ENCODE measurements at regions of chr11 and their contacts with region 1.

Region 1: DNA sequence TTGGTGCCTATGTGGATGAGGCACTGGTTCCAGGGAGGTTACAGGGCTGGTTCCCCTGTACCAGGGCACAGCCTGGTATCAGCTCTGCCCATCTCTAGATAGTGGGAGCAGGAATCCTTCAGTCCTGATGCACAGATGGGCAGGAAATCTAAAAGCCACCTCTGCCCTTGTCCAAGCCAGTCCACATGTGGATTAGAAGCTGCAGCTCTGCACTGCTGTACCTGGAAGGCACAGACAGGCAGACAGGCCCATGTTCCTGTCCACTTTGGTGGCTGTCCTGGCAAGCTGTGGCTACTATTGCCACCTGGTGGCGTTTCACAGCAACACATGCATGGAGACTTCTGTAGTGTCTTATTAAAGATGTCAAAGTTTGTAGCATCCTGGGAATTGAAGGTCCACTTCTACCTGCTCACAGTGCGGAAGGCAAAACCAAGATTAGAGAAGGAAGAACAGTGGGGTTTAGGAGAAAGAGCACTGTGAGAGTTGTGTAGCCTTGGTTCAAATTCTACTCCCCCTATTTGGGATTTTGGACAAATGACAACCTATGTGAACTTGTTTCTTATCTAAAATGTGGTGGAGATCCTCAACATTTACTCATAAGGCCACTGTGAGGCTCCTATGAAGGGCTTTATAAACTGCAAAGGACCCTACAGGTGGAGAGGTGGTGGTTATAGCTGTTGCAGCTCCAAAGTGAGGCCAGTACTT is 30.1 kb downstream of the NAV2 start:
- DNase-seq: no peak
- ATAC-seq: peak; percentile 99
- H3K4me3 ChIP-seq: no peak overlapping the region
- H3K27ac ChIP-seq: no peak overlapping the region
- H3K4me1 ChIP-seq: no peaks in the 10 kb centered on the region
- H3K27me3 ChIP-seq: no peaks in the 10 kb centered on the region
- CTCF ChIP-seq: peak; percentile 74 to 80 (median 75)
- EP300 ChIP-seq: no peak
- POLR2A ChIP-seq: no peak
- RAD21 ChIP-seq: peak; percentile 85

Region 2: GRCh38 chr11:19259487-19260345 is 483.0 kb before region 1 on chr11:
- CTCF ChIA-PET with region 1: interaction called, 4 read pairs
- POLR2A ChIA-PET with region 1: no interaction called
- RAD21 ChIA-PET with region 1: no interaction called
- SMC1A ChIA-PET with region 1: no interaction called
- in situ Hi-C with region 1: no loop called
- intact Hi-C with region 1: loop called (anchors 5 kb)
- DNase-seq: no peak
- ATAC-seq: peak; percentile 91
- H3K4me3 ChIP-seq: no peak overlapping the region
- H3K27ac ChIP-seq: no peak overlapping the region
- H3K4me1 ChIP-seq: no peaks in the 10 kb centered on the region; the same call in 1 of the 2 replicates
- H3K27me3 ChIP-seq: no peaks in the 10 kb centered on the region; a peak in 1 of 4 replicates
- CTCF ChIP-seq: peak; percentile 90 to 96 (median 93)
- EP300 ChIP-seq: no peak
- POLR2A ChIP-seq: no peak
- RAD21 ChIP-seq: peak; percentile 78

Region 3: DNA sequence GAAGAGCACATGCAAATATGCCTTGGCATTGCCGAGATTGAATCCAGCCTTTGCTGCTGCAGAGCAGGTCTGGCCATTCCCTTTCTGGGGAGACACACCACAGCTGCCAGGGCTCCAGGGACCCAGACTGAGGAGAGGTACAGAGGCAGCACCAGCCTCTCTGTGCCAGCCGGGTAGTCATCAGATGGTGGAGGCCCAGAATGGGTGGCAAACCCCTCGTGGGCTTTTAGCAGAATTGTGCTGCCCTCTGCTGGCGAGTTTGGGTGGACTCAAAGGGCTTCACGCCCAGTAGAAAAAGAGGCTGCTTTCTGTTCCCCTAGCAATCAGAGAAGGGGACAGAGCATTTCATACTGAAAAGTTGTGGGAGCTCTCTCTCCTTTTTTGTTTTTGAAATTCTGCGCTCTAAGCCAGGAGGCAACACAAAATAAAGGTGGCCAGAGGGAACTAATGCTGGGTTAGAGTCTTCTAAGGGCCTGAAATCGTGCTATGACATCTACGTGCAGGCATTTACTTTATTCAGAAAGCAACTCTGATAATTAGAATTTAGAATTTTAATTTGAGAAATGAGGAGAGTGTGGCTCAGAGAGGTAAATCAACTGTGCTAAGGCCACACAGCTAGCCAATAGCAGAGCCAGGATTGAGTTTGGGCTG is 188.9 kb before region 1 on chr11:
- CTCF ChIA-PET with region 1: interaction called, 37 read pairs
- POLR2A ChIA-PET with region 1: no interaction called
- RAD21 ChIA-PET with region 1: interaction called, 3 read pairs
- SMC1A ChIA-PET with region 1: interaction called, 3 read pairs
- in situ Hi-C with region 1: no loop called
- intact Hi-C with region 1: loop called (anchors 2 kb)
- DNase-seq: no peak
- ATAC-seq: peak; percentile 94
- H3K4me3 ChIP-seq: no peak overlapping the region
- H3K27ac ChIP-seq: no peak overlapping the region
- H3K4me1 ChIP-seq: peaks cover 13% of the 10 kb centered on the region
- H3K27me3 ChIP-seq: no peaks in the 10 kb centered on the region; a peak in 1 of 4 replicates
- CTCF ChIP-seq: peak; percentile 77 to 94 (median 82)
- EP300 ChIP-seq: no peak
- POLR2A ChIP-seq: no peak
- RAD21 ChIP-seq: peak; percentile 97

Region 4: DNA sequence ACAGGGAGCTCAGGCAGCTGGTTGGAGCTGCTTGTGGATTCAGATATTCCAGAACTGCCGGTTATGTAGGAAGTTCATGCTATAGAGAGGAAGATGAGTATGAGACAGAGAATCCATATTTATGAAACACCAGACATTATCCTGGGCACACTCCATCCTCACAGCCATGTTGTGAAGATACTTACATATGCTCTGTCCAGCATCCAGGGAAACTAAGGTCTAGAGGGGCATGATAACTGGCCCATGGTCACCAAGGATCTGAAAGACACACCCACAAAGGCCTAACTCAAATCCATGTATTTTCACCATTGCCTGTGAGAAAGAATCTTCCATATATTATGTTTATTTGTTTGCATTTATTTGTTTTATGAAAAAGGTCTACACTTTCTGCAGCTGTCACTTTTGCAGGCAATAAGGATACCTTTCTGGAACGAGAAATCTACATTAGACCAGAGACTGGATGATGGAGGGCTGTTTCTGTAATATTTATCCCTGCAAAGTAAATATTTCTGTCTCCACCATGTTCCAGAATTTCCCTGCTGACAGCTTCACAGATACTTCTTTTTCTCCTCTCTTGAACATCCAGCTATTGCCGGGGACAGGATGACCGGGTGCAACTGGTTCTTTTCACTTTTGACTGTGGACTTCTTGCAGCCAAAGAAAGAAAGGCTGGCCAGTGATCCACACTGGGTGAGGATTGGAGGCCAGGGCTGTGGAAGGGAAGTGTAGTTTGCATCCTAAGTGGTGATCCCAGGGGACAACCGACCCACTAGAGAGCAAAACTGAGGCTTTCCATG is 176.0 kb before region 1 on chr11:
- CTCF ChIA-PET with region 1: interaction called, 61 read pairs
- POLR2A ChIA-PET with region 1: no interaction called
- RAD21 ChIA-PET with region 1: interaction called, 31 read pairs
- SMC1A ChIA-PET with region 1: interaction called, 41 read pairs
- in situ Hi-C with region 1: loop called (anchors 5 kb)
- intact Hi-C with region 1: loop called (anchors 1 kb)
- DNase-seq: no peak
- ATAC-seq: no peak
- H3K4me3 ChIP-seq: no peak overlapping the region
- H3K27ac ChIP-seq: no peak overlapping the region
- H3K4me1 ChIP-seq: no peaks in the 10 kb centered on the region
- H3K27me3 ChIP-seq: no peaks in the 10 kb centered on the region; a peak in 2 of 4 replicates
- CTCF ChIP-seq: no peak
- EP300 ChIP-seq: no peak
- POLR2A ChIP-seq: no peak
- RAD21 ChIP-seq: no peak

Region 5: DNA sequence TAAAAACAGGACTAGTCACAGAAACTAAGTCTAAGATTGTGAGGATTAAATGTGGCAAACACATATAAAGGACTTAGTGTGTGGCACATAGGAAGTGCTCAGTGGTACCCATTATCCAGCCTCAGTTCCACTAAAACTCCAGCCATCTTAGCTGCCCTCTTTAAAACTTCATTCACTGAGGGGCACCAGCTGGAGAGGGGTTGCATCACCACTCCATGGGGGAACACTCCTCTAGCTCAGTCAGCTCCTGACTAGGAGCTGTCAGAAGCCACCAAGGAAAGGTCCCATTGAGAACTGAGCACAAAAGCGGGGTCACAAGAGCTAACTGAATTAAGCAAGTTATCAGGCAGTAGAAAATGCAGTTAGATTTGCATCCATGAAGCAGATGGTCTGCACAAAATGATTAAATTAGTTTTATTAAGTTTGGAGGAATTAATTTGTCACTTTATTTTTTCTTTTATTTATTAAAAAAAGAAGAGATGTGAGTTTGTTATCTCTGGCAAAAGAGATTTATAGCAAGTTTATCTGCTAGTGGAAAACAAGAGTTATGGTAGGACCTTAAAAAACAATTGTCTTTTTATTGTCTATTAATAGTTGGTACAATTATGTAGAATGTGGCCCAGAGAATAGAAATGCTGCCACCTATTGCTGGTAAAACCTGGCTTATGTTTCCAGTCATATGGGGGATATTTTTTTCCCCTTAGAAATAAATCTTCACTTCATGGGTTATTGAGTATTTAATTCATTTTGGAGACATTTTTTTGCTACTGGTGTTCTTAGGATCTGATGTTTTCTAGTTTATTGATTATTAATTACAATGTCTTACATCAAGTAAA is 65.6 kb after region 1 on chr11:
- CTCF ChIA-PET with region 1: interaction called, 4 read pairs
- POLR2A ChIA-PET with region 1: no interaction called
- RAD21 ChIA-PET with region 1: interaction called, 4 read pairs
- SMC1A ChIA-PET with region 1: interaction called, 11 read pairs
- in situ Hi-C with region 1: no loop called
- intact Hi-C with region 1: no loop called
- DNase-seq: no peak
- ATAC-seq: no peak
- H3K4me3 ChIP-seq: no peak overlapping the region
- H3K27ac ChIP-seq: no peak overlapping the region
- H3K4me1 ChIP-seq: no peaks in the 10 kb centered on the region
- H3K27me3 ChIP-seq: no peaks in the 10 kb centered on the region
- CTCF ChIP-seq: peak in 1 of 3 experiments; percentile 52; a peak in 2 of 6 replicates
- EP300 ChIP-seq: no peak
- POLR2A ChIP-seq: no peak
- RAD21 ChIP-seq: peak; percentile 43; the same call in 1 of the 2 replicates